ENCODE measurements at regions of chr12 and their contacts with region 1.

Region 1: DNA sequence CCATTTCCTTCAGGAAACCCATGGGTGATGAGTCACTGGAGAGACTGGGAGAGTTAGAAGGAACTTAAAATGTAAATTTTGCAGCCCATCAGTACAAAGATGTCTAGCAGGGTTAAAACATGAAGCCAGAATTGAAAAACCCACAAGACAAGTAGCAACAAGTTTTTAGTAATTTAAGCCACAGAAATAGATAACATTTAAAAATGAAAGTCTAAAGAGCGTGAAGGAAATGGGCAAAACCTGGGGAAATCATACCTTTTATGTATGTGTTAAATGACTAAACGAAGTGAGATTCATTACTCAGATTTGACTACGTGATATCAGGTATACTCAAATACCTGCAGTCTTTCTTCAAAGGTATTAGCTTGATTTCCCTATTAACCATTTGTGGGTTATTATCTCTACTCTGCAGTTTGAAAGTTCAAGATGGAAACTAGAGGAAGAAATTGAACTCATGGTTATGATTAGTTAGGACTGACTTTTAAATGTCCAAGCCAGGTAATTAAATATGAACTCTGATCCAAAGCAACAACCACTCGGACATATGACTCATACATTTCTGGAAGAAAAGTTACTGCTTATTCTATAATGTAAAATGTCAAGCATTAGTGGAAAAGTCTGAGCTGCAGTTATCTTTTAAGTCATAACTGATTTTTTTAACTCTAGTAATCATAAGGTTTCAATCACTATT is 84.1 kb downstream of the ITPR2 start:
- DNase-seq: no peak
- H3K4me3 Mint-ChIP-seq: peak overlapping the region; percentile 16
- H3K27ac Mint-ChIP-seq: peak overlapping the region; percentile 69
- H3K4me1 Mint-ChIP-seq: peaks cover 55% of the 10 kb centered on the region
- H3K27me3 Mint-ChIP-seq: no peaks in the 10 kb centered on the region

Region 2: GRCh38 chr12:26728205-26729050 is 20.5 kb before region 1 on chr12:
- CTCF ChIA-PET with region 1: no interaction called
- POLR2A ChIA-PET with region 1: no interaction called
- intact Hi-C with region 1: loop called (anchors 2 kb)
- DNase-seq: peak; percentile 16
- H3K4me3 Mint-ChIP-seq: no peak overlapping the region
- H3K27ac Mint-ChIP-seq: no peak overlapping the region
- H3K4me1 Mint-ChIP-seq: peaks cover 42% of the 10 kb centered on the region
- H3K27me3 Mint-ChIP-seq: no peaks in the 10 kb centered on the region

Region 3: DNA sequence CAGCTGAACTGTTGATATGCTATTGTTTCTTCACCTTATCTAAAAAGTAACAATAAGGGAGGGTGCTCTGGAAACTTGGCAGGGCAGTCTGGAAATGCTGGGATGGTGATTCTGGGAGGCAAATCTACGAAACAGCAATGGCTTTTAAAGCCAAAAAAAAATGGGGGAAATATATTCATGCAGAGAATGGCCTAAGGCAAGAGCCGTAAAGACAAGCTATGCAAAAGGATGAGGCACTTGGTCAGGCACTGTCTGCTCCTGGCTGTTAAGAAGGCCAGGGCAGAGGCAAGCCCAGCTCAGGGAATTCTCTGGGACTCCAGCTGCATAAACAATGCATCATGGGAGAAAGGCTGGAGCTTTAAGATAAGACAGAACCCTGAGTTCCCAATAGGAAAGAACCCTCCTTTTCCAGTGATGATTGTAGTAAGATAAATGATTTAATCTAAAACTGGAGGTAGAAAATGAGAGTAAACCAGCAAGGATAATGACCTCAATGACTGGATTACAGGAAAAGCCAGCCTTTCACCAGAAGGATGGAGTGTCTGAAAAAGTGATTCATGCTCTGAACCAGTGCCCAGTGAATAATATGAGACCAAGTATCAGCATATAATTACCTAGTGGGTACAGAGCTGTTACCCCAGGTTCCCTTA is 38.1 kb after region 1 on chr12:
- CTCF ChIA-PET with region 1: no interaction called
- POLR2A ChIA-PET with region 1: no interaction called
- intact Hi-C with region 1: loop called (anchors 5 kb)
- DNase-seq: no peak
- H3K4me3 Mint-ChIP-seq: no peak overlapping the region
- H3K27ac Mint-ChIP-seq: no peak overlapping the region
- H3K4me1 Mint-ChIP-seq: peaks cover 28% of the 10 kb centered on the region
- H3K27me3 Mint-ChIP-seq: no peaks in the 10 kb centered on the region

Region 4: DNA sequence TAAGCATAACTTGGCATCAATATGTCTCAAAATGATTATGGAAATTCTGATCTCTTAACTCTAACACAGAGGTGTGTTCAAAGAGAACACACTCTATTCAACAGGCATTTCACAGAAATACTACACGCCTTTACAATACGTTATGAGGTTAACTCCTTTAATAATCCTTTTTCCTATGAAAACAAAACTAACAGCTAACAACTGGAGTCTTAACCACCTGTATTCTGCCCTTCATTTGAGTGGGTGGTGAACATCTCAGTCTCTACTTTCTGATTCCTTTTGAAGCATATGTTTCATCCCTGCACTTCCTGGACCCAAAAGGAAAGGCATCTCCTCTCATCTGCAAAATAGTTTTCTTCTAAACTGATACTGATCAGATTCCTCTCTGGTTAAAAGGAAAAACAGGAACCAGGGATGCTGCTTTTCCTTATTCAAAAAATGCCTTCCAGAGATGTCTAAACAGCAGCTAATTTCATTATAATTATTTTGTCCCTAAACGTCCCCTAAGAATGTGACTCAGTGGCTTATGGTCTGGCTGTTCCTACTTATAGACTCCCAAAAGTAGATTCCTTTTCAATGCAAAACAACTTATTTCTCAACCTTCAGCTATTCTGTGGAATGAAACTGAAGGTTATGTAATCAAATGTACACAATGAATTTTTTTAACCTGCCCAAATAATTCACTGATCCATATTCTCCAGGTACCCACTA is 60.0 kb after region 1 on chr12:
- CTCF ChIA-PET with region 1: no interaction called
- POLR2A ChIA-PET with region 1: no interaction called
- intact Hi-C with region 1: loop called (anchors 2 kb)
- DNase-seq: no peak
- H3K4me3 Mint-ChIP-seq: no peak overlapping the region
- H3K27ac Mint-ChIP-seq: peak overlapping the region; percentile 7
- H3K4me1 Mint-ChIP-seq: peaks cover 34% of the 10 kb centered on the region
- H3K27me3 Mint-ChIP-seq: no peaks in the 10 kb centered on the region

Region 5: DNA sequence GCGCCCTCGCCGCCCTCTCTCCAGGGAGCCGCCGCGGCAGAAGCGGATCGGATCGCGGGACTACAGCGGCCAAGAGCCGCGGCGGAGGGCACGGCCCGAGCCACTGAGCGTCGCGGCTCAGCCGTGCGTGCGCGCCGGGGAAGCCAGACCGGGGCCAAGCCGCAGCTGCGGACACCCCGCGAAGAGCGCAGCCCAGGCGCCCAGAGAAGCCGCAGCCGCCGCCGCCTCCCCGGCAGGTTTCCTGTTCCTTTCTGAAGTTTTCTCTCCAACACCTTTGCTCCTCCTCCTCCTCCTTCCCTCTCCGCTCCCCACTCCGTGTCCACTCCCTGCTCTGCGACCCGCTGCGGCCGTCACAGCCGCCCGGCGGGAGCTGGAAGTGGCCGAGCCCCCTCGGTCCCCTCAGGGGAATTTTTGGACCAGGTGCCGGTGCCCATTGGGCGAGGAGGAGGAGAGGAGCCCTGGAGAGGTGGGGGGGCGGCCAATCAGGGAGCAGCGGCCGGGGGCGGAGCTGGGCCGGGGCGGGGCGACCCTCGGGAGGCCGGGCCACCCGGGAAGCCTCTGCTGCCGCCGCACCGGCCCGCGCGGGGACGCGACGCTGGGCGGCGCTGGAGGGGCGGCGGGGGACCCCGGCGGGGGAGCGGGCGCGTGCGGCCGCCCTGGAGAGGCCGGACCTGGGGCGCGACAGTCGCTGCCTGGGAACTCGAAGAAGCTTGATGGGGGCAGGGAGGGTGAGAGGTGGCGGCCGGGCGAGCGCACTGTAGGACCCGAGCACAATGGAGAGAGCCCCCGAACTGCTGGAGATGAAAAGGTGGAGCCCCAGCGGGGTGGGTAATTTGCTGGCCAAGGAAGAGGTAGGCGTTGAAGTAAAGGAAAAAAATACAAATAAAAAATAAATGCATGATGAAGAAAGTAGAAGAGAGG is 84.2 kb after region 1 on chr12 and contains the start of gene ITPR2:
- CTCF ChIA-PET with region 1: interaction called, 8 read pairs
- POLR2A ChIA-PET with region 1: interaction called, 6 read pairs
- intact Hi-C with region 1: loop called (anchors 1 kb)
- DNase-seq: peak; percentile 96
- H3K4me3 Mint-ChIP-seq: peak within 1 kb of the TSS; percentile 99
- H3K27ac Mint-ChIP-seq: peak within 1 kb of the TSS; percentile 98
- H3K4me1 Mint-ChIP-seq: peaks cover 34% of the 10 kb centered on the region
- H3K27me3 Mint-ChIP-seq: no peaks in the 10 kb centered on the region
- total RNA-seq, gene ITPR2: 23.7 to 25.0 TPM

Region 6: GRCh38 chr12:27161458-27162228 is 412.8 kb after region 1 on chr12:
- CTCF ChIA-PET with region 1: no interaction called
- POLR2A ChIA-PET with region 1: no interaction called
- intact Hi-C with region 1: no loop called
- DNase-seq: no peak
- H3K4me3 Mint-ChIP-seq: no peak overlapping the region
- H3K27ac Mint-ChIP-seq: no peak overlapping the region
- H3K4me1 Mint-ChIP-seq: peaks cover 3% of the 10 kb centered on the region
- H3K27me3 Mint-ChIP-seq: no peaks in the 10 kb centered on the region

Measured in activated CD4-positive, alpha-beta memory T cell treated with anti-CD3 and anti-CD28 coated beads for 36 hours (primary cell).